ENCODE measurements at regions of chr11 and their contacts with region 1.

Region 1: GRCh38 chr11:2778630-2779498 is 79.1 kb upstream of the KCNQ1OT1 start:
- DNase-seq: peak; percentile 92
- H3K4me3 ChIP-seq: peak overlapping the region; percentile 20 to 47 (median 36)
- H3K27ac ChIP-seq: peak overlapping the region; percentile 84 to 91 (median 86)
- H3K4me1 ChIP-seq: peaks cover 41 to 52% (median 45%) of the 10 kb centered on the region in 4 donors
- H3K27me3 ChIP-seq: no peaks in the 10 kb centered on the region
- CTCF ChIP-seq: peak; percentile 40 to 72 (median 51)
- EP300 ChIP-seq: peak; percentile 87
- POLR2A ChIP-seq: no peak

Region 2: DNA sequence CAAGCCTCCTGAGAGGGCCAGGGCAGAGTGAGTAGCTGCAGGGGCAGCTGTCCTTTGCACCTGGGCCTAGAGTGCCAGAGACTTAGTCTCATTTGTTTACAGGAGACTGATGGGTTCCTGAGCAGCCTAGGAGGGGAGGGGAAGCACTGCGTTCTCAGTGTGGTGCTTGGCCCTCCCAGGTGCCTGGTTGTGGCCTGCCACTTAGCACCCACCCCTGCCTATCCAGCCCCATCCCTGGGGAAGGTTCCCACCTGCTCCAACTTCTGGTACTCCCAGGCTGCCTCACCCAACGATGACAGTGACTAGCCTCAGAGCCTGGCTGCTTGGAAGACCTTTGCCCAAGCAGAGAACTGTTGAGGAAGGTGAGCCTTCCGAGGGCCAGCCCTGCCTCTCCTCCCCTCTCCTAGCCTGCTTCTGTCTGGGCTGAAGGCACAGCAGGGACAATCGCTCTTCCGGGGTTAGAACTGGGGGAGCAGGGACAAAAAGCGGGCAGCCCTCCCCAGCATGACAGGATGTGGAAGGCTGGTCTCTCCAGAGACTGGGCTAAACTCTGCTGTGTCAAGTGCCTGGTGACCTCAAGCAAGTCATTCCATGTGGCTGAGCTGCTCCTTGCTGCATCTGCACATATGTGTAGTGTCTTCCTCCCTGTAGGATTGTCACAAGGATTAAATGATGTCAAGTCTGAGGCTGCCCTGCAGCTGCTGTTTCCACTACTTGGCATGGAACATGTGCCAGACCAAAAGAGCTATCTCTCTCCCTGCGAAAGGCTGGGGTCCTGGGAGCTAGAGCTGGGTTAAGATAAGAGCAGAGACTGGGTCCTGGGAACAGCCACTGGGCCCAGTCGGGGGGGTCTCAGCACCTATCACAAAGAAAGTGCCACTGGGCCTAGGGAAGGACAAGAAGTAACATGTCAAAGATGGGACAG is 89.0 kb before region 1 on chr11:
- intact Hi-C with region 1: no loop called
- DNase-seq: no peak
- H3K4me3 ChIP-seq: no peak overlapping the region
- H3K27ac ChIP-seq: no peak overlapping the region
- H3K4me1 ChIP-seq: peaks cover 43 to 84% (median 81%) of the 10 kb centered on the region in 4 donors
- H3K27me3 ChIP-seq: no peaks in the 10 kb centered on the region
- CTCF ChIP-seq: no peak
- EP300 ChIP-seq: no peak
- POLR2A ChIP-seq: no peak

Region 3: GRCh38 chr11:2708151-2708581 is 70.7 kb before region 1 on chr11:
- intact Hi-C with region 1: loop called (anchors 2 kb)
- DNase-seq: no peak
- H3K4me3 ChIP-seq: peak overlapping the region; percentile 28 to 35 (median 32)
- H3K27ac ChIP-seq: peak overlapping the region; percentile 80 to 89 (median 88)
- H3K4me1 ChIP-seq: peaks cover 12 to 35% (median 28%) of the 10 kb centered on the region in 4 donors
- H3K27me3 ChIP-seq: no peaks in the 10 kb centered on the region
- CTCF ChIP-seq: peak in 1 of 3 experiments; percentile 9
- EP300 ChIP-seq: no peak
- POLR2A ChIP-seq: no peak

Region 4: GRCh38 chr11:2825889-2826678 is 47.2 kb after region 1 on chr11:
- intact Hi-C with region 1: loop called (anchors 5 kb)
- DNase-seq: peak; percentile 94
- H3K4me3 ChIP-seq: peak overlapping the region; percentile 34 to 54 (median 40)
- H3K27ac ChIP-seq: peak overlapping the region; percentile 90 to 99 (median 96)
- H3K4me1 ChIP-seq: peaks cover 35 to 53% (median 41%) of the 10 kb centered on the region in 4 donors
- H3K27me3 ChIP-seq: no peaks in the 10 kb centered on the region
- CTCF ChIP-seq: no peak
- EP300 ChIP-seq: peak; percentile 55
- POLR2A ChIP-seq: no peak

Measured in esophagus muscularis mucosa (tissue), 4 donors.